H1 (cell line): ENCODE measurements at regions of chr5 and their contacts with region 1.

Region 1: GRCh38 chr5:106986006-106986405 is 684.7 kb downstream of the EFNA5 start:
- DNase-seq: no peak
- H3K4me3 ChIP-seq: peak overlapping the region in 1 of 4 experiments; percentile 52; a peak in 1 of 8 replicates
- H3K27ac ChIP-seq: no peak overlapping the region
- H3K4me1 ChIP-seq: peaks cover 0 to 20% (median 3%) of the 10 kb centered on the region in 4 experiments; a peak in 4 of 7 replicates
- H3K27me3 ChIP-seq: no peaks in the 10 kb centered on the region
- CTCF ChIP-seq: no peak
- EP300 ChIP-seq: no peak
- POLR2A ChIP-seq: 0 out of 3 replicates have a peak, but pooled peaks of 1 of the 2 experiments have one; percentile 35
- RAD21 ChIP-seq: no peak

Region 2: DNA sequence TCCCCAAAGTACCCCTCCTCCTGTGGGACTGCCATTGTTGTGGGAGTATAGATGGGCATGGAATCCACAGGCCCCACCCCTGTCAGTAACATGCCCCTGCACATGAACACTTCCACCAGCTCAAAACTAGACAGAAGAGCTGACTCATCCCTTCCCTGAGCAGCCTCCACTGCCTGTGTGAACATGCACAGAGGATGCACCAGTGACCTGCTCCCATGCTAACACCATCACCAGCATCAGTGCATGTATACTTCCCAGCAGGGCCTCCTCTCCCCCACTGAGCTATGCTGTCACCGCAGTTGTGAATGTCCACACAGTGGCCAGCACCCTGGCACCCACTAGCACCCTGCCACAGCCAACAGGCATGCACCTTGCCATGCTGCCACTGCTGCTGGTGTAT is 255.1 kb before region 1 on chr5:
- CTCF ChIA-PET with region 1: no interaction called
- POLR2A ChIA-PET with region 1: no interaction called
- DNase-seq: no peak
- H3K4me3 ChIP-seq: no peak overlapping the region
- H3K27ac ChIP-seq: no peak overlapping the region
- H3K4me1 ChIP-seq: no peaks in the 10 kb centered on the region
- H3K27me3 ChIP-seq: no peaks in the 10 kb centered on the region
- CTCF ChIP-seq: no peak
- EP300 ChIP-seq: no peak
- POLR2A ChIP-seq: no peak
- RAD21 ChIP-seq: no peak

Region 3: DNA sequence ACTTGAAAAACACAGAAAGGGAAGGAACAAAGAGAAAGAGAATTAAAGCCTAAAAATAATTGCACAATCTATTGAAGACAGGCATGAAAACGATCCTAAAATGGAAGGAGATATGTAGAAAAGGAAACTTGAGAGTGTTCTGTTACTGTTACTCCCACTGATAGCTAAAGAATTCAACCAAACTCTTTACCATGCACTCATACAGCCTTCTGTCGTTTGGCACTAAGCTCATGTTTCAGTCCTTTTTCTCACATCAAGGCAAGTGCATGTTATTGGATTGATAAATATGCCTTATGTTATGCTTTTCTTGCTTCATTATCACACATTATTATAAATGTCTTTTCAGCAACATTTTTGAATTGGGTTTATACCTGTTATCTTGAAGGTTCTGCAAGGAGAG is 11.7 kb before region 1 on chr5:
- CTCF ChIA-PET with region 1: interaction called, 3 read pairs
- POLR2A ChIA-PET with region 1: interaction called, 13 read pairs
- DNase-seq: no peak
- H3K4me3 ChIP-seq: no peak overlapping the region
- H3K27ac ChIP-seq: no peak overlapping the region
- H3K4me1 ChIP-seq: peaks cover 0 to 11% (median 4%) of the 10 kb centered on the region in 4 experiments; a peak in 3 of 7 replicates
- H3K27me3 ChIP-seq: no peaks in the 10 kb centered on the region
- CTCF ChIP-seq: no peak
- EP300 ChIP-seq: no peak
- POLR2A ChIP-seq: no peak
- RAD21 ChIP-seq: no peak

Region 4: DNA sequence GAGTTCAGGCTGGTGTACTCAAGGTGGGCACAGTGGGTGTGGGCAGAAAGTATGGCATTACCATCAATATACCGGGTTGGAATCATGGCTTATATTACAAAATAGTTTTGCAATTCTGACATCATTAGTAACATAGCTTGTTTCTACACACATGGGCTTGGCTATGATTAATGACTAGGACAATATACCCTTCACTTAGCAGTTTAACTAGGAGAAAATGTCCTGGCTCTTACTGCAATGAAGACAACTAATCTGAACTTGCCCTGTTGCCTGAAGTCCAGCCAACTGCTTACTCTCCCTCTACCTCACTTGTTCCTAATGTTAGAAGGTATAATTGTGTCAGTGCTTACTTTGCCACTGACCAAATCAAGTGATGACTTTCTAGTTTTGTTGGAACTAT is 72.2 kb after region 1 on chr5:
- CTCF ChIA-PET with region 1: no interaction called
- POLR2A ChIA-PET with region 1: no interaction called
- DNase-seq: no peak
- H3K4me3 ChIP-seq: no peak overlapping the region
- H3K27ac ChIP-seq: no peak overlapping the region
- H3K4me1 ChIP-seq: no peaks in the 10 kb centered on the region
- H3K27me3 ChIP-seq: peaks cover 0 to 2% (median 0%) of the 10 kb centered on the region in 4 experiments; a peak in 1 of 7 replicates
- CTCF ChIP-seq: no peak
- EP300 ChIP-seq: no peak
- POLR2A ChIP-seq: no peak
- RAD21 ChIP-seq: no peak